Left ventricle myocardium superior (tissue), 1 donor: ENCODE measurements at regions of chr13 and their contacts with region 1.

Region 1: DNA sequence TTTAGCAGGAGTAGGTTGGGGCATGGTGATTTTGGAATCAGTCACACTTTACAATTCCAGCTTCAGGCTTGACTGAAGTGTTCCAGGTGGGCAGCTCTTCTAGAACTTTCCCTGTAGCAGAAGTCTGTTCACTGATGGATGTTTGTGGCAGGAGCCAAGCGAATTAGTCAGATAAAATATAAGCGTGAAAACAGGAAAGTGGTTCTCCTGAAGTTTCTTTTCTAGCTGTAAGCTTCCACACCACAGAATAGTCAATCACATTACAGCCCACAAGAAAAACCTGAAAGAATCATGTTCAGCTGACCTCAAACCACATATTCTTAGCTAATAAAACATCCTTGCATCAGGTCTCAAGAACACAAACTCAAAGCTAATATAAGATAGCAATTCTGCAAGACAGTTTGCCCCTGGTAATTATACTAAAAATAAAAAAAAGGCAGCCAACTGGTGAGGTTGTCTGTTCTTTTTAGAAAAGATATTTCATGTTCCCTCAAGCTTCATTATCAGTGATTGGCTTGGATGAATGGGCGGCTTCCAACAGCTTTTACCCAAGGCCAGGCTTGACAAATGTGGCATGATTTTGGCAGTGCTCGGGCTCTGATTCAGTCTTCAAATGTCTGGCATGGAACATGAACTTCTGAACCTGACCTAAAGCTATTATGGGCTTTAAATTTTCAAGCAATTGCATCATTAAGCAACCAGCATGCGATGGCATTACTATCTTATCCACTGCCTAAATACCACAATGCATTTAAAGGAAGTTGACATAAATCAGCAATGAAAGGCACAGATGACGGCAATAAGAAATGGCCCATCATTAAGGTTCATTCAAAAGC is 136.8 kb downstream of the DCLK1 start:
- DNase-seq: peak; percentile 48
- ATAC-seq: peak; percentile 97

Region 2: GRCh38 chr13:34708566-34709313 is 1285.6 kb before region 1 on chr13:
- intact Hi-C with region 1: no loop called
- DNase-seq: no peak
- ATAC-seq: no peak

Region 3: GRCh38 chr13:36131222-36131930 is 137.0 kb after region 1 on chr13 and contains the start of gene DCLK1:
- intact Hi-C with region 1: loop called (anchors 10 kb)
- DNase-seq: peak; percentile 88
- ATAC-seq: peak; percentile 88
- total RNA-seq, gene DCLK1: 9.9 TPM